Activated CD4-positive, alpha-beta T cell treated with anti-CD3 and anti-CD28 coated beads, Interleukin-2, amount 10 ng/mL, durations not matched to agents 7 days and 5 days (primary cell): ENCODE measurements at regions of chr19 and their contacts with region 1.

Region 1: GRCh38 chr19:10620786-10621185 is 4.6 kb upstream of the SLC44A2 start:
- DNase-seq: no peak
- H3K4me3 Mint-ChIP-seq: no peak overlapping the region
- H3K27ac Mint-ChIP-seq: peak overlapping the region; percentile 82
- H3K4me1 Mint-ChIP-seq: peaks cover 49% of the 10 kb centered on the region
- H3K27me3 Mint-ChIP-seq: no peaks in the 10 kb centered on the region

Region 2: DNA sequence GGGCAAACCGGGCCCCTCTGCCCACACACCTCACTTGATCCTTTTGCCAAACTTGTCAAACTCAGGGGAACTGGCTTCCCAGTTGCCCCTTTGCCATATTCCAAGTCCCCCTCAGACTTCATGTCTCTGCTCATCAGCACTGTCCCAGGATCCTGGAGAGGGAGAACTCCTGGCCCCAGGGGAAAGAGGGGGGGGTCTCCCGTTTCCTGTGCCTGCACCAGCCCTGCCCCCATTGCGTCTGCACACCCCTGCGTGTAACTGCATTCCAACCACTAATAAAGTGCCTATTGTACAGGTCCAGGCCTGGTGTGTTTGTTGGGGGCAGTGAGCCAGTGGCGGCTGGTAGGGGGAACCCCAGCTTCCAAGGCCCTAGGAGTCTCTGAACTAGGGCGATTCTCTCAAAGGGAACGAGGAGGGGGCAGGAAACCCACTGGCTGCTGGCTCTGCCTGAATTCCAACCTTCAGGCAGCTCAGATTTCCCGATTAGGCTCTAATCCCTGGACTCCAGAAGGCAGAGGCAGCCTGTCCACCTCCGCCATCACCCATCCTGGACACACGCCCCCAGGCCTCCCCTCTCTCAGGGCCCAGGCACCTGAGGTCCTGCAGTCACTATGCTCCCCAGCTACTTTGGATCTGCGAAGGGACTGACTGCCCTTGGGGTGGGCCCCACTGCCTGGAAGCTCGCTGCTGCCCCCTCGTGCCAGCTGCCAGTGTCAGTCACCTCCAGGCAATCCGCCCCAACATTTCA is 23.6 kb after region 1 on chr19:
- CTCF ChIA-PET with region 1: interaction called, 12 read pairs
- POLR2A ChIA-PET with region 1: no interaction called
- DNase-seq: peak; percentile 87
- H3K4me3 Mint-ChIP-seq: no peak overlapping the region
- H3K27ac Mint-ChIP-seq: no peak overlapping the region
- H3K4me1 Mint-ChIP-seq: peaks cover 25% of the 10 kb centered on the region
- H3K27me3 Mint-ChIP-seq: no peaks in the 10 kb centered on the region